Head of caudate nucleus (tissue), 42 donors: ENCODE measurements at regions of chrX and their contacts with region 1.

Region 1: DNA sequence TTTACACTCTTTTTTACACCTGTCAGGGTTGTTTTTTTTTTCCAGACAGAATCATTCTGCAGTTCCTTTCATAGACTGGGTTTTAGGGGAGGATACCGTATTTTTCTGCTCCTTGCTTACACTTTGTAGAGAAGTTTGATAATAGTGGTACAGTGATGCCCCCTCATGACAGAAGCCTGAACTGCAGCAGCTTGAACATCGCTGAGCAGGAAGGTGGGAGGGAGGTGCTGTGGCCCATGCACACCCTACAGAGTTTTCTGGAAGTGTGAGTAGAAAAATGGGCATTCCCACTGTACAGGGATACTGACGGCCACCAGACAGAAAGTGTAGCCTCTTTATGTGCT is 54.5 kb downstream of the RAB40A start:
- DNase-seq: peak; percentile 25 to 90 (median 76)

Region 2: DNA sequence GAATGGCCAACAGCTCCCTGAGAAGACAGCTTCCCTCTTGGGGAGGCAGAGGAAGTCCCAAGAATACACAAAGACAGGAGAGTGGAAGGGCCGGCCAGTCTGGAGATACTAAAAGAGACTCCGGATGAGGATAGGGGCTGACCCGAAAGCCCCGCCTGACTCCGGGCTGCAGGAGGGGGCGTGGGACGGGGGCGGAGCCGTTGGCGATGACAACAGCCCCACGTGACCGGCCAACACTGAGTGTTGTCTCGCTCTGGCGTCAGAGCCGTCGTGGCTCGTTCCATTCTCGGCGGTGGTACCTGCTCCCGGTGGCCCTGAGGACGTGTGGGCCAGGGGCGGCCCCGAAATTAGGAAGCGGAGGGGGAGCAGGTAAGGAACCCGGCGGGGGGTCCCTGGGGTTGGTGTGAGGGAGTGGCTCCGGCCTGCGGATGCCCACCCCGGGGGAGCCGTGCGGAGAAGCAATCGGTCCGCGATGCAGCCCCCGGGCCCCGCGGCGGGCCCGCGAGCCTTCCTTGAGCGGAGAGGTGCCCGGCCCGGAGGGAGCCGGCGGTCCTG is 249.8 kb before region 1 on chrX and contains the start of gene BEX4:
- intact Hi-C with region 1: loop called (anchors 5 kb)
- DNase-seq: peak; percentile 85 to 96 (median 91)

Region 3: GRCh38 chrX:103343105-103343504 is 121.6 kb before region 1 on chrX:
- intact Hi-C with region 1: loop called (anchors 10 kb)
- DNase-seq: peak in 33 of 42 donors; percentile 11 to 83 (median 51)

Region 4: GRCh38 chrX:103573208-103573607 is 108.5 kb after region 1 on chrX:
- intact Hi-C with region 1: no loop called
- DNase-seq: no peak